SK-N-SH (cell line): ENCODE measurements at regions of chr1 and their contacts with region 1.

Region 1: DNA sequence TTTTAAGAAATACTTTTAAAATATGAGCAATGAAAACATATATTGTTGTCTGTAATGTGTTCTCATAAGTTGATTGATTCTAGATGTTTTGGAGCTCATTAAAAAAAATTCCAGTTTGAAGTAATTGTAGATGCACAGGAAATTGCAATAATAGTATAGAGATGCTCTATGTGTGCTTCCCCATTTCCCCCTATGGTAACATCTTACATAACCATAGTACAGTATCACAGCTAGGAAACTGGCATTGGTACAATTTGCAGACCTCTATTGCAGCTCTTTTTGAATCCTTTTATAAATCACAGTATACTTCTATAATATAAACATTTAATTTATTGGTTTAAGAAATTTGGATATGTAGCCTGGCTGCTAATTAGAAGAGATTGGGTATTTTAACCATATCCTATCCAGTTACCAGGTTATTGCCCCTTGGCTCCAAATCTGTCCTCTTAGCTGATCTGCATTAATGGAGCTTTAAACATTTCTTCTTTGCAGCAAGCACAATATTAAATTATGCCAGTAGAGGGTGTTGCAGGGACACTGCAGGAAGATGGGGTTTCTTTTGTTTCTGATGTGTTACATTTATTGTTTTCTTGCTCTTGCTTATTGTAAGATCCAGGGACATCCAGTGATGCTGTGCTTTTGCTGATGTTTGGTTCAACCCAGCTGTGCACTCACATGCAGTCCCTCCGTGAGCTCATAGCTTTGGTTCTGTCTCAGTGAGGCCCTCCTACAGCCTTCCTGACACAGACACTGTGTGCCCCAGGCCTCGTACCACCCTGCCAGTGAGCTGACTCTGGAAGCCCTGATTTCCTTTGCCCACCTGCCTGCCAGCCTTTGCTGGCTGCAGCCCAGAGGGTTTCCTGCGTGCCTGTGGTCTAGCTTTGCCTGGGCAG is 103.3 kb downstream of the RABGAP1L start:
- DNase-seq: peak; percentile 62
- H3K4me3 ChIP-seq: no peak overlapping the region; a peak in 1 of 4 replicates
- H3K27ac ChIP-seq: peak overlapping the region; percentile 25 to 67; a peak in 3 of 4 replicates
- H3K4me1 ChIP-seq: peaks cover 5 to 11% of the 10 kb centered on the region in 2 experiments; a peak in 3 of 4 replicates
- H3K27me3 ChIP-seq: no peaks in the 10 kb centered on the region
- CTCF ChIP-seq: peak; percentile 83
- EP300 ChIP-seq: no peak
- RAD21 ChIP-seq: peak; percentile 91

Region 2: GRCh38 chr1:174222166-174222949 is 40.2 kb before region 1 on chr1:
- CTCF ChIA-PET with region 1: no interaction called
- POLR2A ChIA-PET with region 1: no interaction called
- DNase-seq: no peak
- H3K4me3 ChIP-seq: no peak overlapping the region
- H3K27ac ChIP-seq: no peak overlapping the region
- H3K4me1 ChIP-seq: no peaks in the 10 kb centered on the region; a peak in 1 of 4 replicates
- H3K27me3 ChIP-seq: no peaks in the 10 kb centered on the region
- CTCF ChIP-seq: no peak
- EP300 ChIP-seq: no peak
- RAD21 ChIP-seq: no peak

Region 3: GRCh38 chr1:174276087-174276486 is 13.5 kb after region 1 on chr1:
- CTCF ChIA-PET with region 1: interaction called, 22 read pairs
- POLR2A ChIA-PET with region 1: no interaction called
- DNase-seq: no peak
- H3K4me3 ChIP-seq: no peak overlapping the region
- H3K27ac ChIP-seq: no peak overlapping the region
- H3K4me1 ChIP-seq: no peaks in the 10 kb centered on the region
- H3K27me3 ChIP-seq: no peaks in the 10 kb centered on the region
- CTCF ChIP-seq: no peak
- EP300 ChIP-seq: no peak
- RAD21 ChIP-seq: no peak

Region 4: DNA sequence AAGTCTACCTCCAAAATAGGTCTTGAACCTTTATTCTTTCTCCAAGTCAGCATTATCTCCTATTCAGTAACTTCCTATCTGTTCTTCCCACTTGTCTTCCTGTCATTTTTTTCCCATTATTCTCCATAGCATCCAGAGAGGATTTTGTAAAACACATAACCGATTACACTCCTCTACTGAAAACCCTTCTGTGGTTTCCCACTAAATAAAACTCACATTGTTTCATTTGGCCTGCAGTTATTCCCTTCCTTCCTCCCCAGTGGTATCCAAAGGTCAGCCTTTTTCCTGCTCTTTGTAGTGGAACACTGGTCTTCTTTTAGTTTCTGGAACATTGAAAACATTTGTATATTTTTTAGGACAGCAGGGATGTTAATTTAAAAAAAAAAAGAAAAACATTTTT is 451.2 kb after region 1 on chr1:
- CTCF ChIA-PET with region 1: interaction called, 15 read pairs
- POLR2A ChIA-PET with region 1: no interaction called
- DNase-seq: no peak
- H3K4me3 ChIP-seq: no peak overlapping the region
- H3K27ac ChIP-seq: no peak overlapping the region
- H3K4me1 ChIP-seq: no peaks in the 10 kb centered on the region
- H3K27me3 ChIP-seq: no peaks in the 10 kb centered on the region
- CTCF ChIP-seq: no peak
- EP300 ChIP-seq: no peak
- RAD21 ChIP-seq: no peak

Region 5: DNA sequence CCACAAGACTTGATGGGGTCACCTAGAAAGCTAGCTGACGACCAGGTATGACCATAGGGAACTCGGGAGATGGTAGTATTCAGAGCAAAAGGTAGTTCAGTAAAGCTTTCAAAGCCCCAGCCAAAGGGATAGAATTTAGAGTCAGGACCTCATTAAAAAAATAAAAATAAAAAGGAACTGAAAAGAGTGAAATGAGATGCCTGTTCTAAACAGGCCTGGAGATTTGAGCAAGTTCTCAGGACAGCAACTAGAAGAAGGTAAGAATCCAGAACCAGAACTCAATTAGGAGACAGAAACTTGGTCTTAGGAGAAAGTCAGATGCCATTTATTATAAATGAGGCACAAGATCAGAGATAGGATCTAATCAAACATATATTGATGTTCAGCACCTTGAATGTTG is 471.7 kb after region 1 on chr1:
- CTCF ChIA-PET with region 1: interaction called, 117 read pairs
- POLR2A ChIA-PET with region 1: no interaction called
- DNase-seq: no peak
- H3K4me3 ChIP-seq: no peak overlapping the region
- H3K27ac ChIP-seq: no peak overlapping the region
- H3K4me1 ChIP-seq: no peaks in the 10 kb centered on the region
- H3K27me3 ChIP-seq: no peaks in the 10 kb centered on the region
- CTCF ChIP-seq: no peak
- EP300 ChIP-seq: no peak
- RAD21 ChIP-seq: no peak

Region 6: DNA sequence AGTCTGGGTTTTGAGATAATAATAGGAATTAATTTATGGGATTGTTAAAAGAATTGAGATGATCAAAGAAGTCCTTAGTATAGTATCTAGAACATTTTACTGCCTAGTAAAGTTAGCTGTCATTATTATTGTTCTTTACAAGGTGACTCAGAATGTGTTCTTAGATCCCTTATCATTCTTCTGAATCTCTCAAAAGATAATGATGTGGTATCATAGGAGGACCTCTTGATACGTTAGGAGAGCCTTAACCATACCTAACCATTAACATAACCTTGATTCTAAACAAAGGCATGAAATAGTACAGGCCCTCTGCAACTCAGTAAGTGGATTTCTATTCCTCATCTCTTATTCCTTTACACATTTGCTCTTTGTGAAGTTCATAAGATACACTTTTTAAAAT is 490.5 kb after region 1 on chr1:
- CTCF ChIA-PET with region 1: interaction called, 117 read pairs
- POLR2A ChIA-PET with region 1: no interaction called
- DNase-seq: no peak
- H3K4me3 ChIP-seq: no peak overlapping the region
- H3K27ac ChIP-seq: no peak overlapping the region
- H3K4me1 ChIP-seq: no peaks in the 10 kb centered on the region
- H3K27me3 ChIP-seq: no peaks in the 10 kb centered on the region
- CTCF ChIP-seq: no peak
- EP300 ChIP-seq: no peak
- RAD21 ChIP-seq: no peak